Activated CD8-positive, alpha-beta T cell treated with anti-CD3 and anti-CD28 coated beads for 36 hours (primary cell): ENCODE measurements at regions of chr1 and their contacts with region 1.

Region 1: DNA sequence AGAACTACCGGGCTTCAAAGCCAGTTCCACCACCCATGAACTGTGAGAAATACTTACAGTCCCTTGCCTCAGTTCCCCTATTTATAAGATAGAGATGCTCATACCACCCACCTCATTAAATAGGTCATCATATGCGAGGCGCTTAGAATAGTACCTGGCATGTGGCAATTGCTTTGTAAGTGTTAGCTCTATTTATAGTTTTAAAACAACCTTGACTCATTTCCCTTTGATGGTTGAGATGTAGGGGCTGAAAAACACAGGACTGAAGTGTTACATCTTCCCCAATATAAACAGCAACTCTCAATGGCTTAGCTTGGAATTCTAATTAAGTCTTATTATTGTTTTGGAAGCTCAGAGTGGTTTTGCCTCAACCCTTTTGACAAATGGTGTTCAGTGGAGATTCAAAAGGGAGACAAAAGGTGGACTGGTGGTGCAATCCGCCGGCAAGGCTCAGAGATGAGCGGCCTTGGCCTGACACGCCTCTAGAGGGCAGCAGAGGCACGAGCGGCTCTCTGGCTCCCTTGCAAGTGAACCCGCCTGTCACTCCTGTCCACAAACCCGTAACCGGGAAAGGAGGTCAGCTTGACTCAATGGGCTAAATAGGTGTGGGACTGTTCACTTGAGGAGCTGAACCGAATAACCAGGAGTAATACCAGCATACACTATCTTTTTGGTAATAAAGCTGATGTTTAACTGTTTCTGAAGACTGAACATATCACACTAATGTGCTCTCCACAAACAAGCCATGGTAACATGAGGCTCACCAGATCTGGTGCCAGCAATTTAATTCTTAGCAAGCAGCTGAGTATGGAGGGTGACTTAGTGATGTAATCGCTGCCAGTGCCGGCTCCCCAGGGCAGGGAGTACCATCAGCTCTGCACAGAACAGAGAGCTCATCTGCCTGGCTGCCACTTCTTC is 19.5 kb upstream of the SMYD2 start:
- DNase-seq: peak; percentile 86
- ATAC-seq: peak; percentile 90
- H3K4me3 Mint-ChIP-seq: no peak overlapping the region
- H3K27ac Mint-ChIP-seq: no peak overlapping the region
- H3K4me1 Mint-ChIP-seq: peaks cover 10% of the 10 kb centered on the region
- H3K27me3 Mint-ChIP-seq: peaks cover 45% of the 10 kb centered on the region
- CTCF ChIP-seq: peak; percentile 87

Region 2: DNA sequence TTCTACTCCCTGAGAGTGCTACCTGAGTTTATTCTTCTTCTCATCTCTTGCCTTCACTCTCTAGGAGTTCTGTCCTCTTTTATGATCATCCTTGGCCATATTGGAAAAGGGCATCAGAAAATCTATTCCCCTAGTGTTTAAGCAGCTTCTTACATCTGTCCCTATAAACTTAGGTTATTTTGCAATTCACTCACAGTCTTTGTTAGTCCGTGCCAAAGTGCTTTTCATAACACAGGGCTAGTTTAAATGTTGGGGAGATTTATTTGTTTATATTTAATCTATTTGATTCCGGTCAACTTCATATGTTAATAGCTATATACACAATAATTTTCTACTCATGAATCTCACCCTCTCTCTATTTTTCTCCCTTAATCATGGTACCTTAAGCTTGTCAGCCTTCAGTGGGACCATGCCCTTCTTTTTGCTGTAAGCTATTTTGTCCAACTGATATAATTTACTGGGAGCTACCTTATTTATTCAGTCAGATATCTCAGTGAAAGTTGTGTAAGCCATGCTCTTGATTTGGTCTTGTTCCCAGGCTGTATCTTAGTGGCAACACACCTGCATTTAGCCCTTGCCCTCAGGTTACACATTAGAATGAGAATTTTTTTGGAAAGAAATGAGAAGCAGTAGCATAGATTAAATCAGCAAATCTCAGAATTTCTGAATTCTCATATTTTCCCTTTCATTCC is 86.8 kb before region 1 on chr1:
- CTCF ChIA-PET with region 1: no interaction called
- POLR2A ChIA-PET with region 1: no interaction called
- intact Hi-C with region 1: no loop called
- DNase-seq: no peak
- ATAC-seq: no peak
- H3K4me3 Mint-ChIP-seq: no peak overlapping the region
- H3K27ac Mint-ChIP-seq: no peak overlapping the region
- H3K4me1 Mint-ChIP-seq: no peaks in the 10 kb centered on the region
- H3K27me3 Mint-ChIP-seq: peaks cover 30% of the 10 kb centered on the region
- CTCF ChIP-seq: no peak

Region 3: GRCh38 chr1:214248311-214249085 is 13.0 kb before region 1 on chr1:
- CTCF ChIA-PET with region 1: interaction called, 21 read pairs
- POLR2A ChIA-PET with region 1: no interaction called
- intact Hi-C with region 1: no loop called
- DNase-seq: no peak
- ATAC-seq: no peak
- H3K4me3 Mint-ChIP-seq: no peak overlapping the region
- H3K27ac Mint-ChIP-seq: no peak overlapping the region
- H3K4me1 Mint-ChIP-seq: no peaks in the 10 kb centered on the region
- H3K27me3 Mint-ChIP-seq: peaks cover 15% of the 10 kb centered on the region
- CTCF ChIP-seq: no peak

Region 4: GRCh38 chr1:214303141-214303930 is 41.9 kb after region 1 on chr1:
- CTCF ChIA-PET with region 1: interaction called, 21 read pairs
- POLR2A ChIA-PET with region 1: interaction called, 3 read pairs
- intact Hi-C with region 1: no loop called
- DNase-seq: no peak
- ATAC-seq: no peak
- H3K4me3 Mint-ChIP-seq: no peak overlapping the region
- H3K27ac Mint-ChIP-seq: no peak overlapping the region
- H3K4me1 Mint-ChIP-seq: peaks cover 18% of the 10 kb centered on the region
- H3K27me3 Mint-ChIP-seq: no peaks in the 10 kb centered on the region
- CTCF ChIP-seq: no peak

Region 5: DNA sequence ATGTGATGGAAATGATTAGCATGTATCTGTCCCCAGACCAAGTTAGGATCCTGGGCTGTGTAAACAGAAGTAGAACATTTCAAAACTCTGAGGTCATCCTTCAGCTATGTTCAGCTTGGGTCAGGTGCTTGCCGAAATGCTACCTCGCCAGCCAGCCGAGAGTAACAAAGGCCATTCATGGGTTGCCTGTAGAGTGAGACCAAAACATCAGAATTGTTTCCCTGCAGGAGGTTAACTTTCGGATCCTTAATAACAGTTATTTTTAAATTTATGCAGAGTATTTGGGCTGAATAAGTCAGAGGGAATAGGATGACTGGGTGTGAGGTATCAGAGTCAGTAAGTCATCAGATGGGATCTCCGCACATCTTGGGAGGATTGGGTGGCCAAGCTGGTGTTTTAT is 55.1 kb after region 1 on chr1:
- CTCF ChIA-PET with region 1: interaction called, 30 read pairs
- POLR2A ChIA-PET with region 1: interaction called, 3 read pairs
- intact Hi-C with region 1: no loop called
- DNase-seq: no peak
- ATAC-seq: no peak
- H3K4me3 Mint-ChIP-seq: no peak overlapping the region
- H3K27ac Mint-ChIP-seq: no peak overlapping the region
- H3K4me1 Mint-ChIP-seq: peaks cover 2% of the 10 kb centered on the region
- H3K27me3 Mint-ChIP-seq: no peaks in the 10 kb centered on the region
- CTCF ChIP-seq: no peak

Region 6: DNA sequence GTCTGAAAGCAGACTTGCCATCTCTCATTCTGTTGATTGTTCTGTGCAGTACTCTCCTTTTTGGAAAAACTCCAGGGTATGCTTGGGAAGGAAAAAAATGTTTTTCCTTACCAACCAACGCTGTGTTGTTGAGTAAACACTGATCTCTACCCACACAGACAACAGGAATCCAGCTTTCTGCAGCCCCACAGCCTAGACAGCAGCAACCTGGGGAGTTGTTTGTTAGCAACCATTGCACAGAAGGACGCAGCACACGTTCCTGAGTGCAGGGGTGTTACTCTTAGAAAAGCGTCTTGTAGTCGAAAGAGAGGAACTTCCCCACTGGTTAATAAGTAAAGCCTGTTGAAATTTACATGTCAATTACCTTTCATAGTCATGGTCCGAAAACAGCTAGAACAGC is 76.0 kb after region 1 on chr1:
- CTCF ChIA-PET with region 1: interaction called, 505 read pairs
- POLR2A ChIA-PET with region 1: no interaction called
- intact Hi-C with region 1: no loop called
- DNase-seq: no peak
- ATAC-seq: no peak
- H3K4me3 Mint-ChIP-seq: no peak overlapping the region
- H3K27ac Mint-ChIP-seq: no peak overlapping the region
- H3K4me1 Mint-ChIP-seq: no peaks in the 10 kb centered on the region
- H3K27me3 Mint-ChIP-seq: no peaks in the 10 kb centered on the region
- CTCF ChIP-seq: no peak

Region 7: GRCh38 chr1:214401666-214402065 is 140.2 kb after region 1 on chr1:
- CTCF ChIA-PET with region 1: no interaction called
- POLR2A ChIA-PET with region 1: no interaction called
- intact Hi-C with region 1: no loop called
- DNase-seq: no peak
- ATAC-seq: no peak
- H3K4me3 Mint-ChIP-seq: no peak overlapping the region
- H3K27ac Mint-ChIP-seq: no peak overlapping the region
- H3K4me1 Mint-ChIP-seq: peaks cover 20% of the 10 kb centered on the region
- H3K27me3 Mint-ChIP-seq: no peaks in the 10 kb centered on the region
- CTCF ChIP-seq: no peak

Region 8: DNA sequence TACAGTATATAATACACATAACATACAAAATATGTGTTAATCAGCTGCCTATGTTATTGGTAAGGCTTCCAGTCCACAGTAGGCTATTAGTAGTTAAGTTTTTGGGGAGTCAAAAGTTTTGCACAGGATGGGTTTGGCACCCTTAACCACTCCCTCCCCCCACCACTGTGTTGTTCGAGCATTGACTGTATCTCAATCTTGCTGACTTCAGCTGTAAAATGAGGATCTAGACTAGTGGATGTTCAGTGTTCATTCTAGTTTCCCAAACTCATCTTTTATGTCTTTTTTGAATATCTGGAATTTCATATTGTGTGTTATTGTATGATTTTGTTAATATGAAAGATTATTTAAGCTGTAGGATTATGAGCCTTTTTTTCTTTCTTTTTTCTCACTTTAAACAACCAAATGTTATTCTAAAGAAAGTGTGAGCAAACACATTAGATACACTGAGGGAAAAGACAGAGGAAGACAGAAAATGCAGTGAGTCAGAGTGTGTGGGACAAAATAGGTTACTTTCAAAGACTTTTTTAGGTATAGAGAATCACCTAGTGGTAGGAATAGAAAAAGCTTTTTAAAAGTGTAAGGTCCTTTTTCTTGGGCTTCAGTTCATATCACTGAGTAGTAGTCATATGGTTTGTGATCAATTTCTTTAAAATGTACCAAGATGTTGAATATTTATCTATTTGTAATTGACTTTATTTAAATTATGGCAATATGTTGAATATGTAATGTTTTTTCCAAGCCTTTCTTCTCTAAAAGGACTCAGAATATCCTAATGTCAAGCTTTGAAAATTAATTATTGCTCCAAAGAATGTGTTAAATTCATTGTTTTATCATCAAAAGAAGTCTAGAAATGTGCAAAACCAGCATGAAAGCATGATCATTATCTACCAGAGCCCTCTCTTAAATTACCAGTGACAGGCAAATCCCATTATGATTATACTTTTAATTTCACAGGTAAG is 323.6 kb after region 1 on chr1:
- CTCF ChIA-PET with region 1: interaction called, 14 read pairs
- POLR2A ChIA-PET with region 1: no interaction called
- intact Hi-C with region 1: no loop called
- DNase-seq: no peak
- ATAC-seq: peak; percentile 78
- H3K4me3 Mint-ChIP-seq: no peak overlapping the region
- H3K27ac Mint-ChIP-seq: no peak overlapping the region
- H3K4me1 Mint-ChIP-seq: no peaks in the 10 kb centered on the region
- H3K27me3 Mint-ChIP-seq: peaks cover 6% of the 10 kb centered on the region
- CTCF ChIP-seq: peak; percentile 59